Activated T-helper 1 cell treated with anti-CD3 and anti-CD28 coated beads, Interleukin-12 subunit alpha, Interleukin-12 subunit beta, Interleukin-2, Interleukin-4 antibody, amounts not matched to agents 30 ng/mL and 10 ng/mL and 1 ng/mL, durations not matched to agents 14 hours and 24 hours and 36 hours (primary cell): ENCODE measurements at regions of chr7 and their contacts with region 1.

Region 1: GRCh38 chr7:141585592-141586510 is 34.6 kb downstream of the AGK start:
- DNase-seq: no peak
- H3K4me3 Mint-ChIP-seq: peak overlapping the region; percentile 75
- H3K27ac Mint-ChIP-seq: peak overlapping the region; percentile 94
- H3K4me1 Mint-ChIP-seq: peaks cover 74% of the 10 kb centered on the region
- H3K27me3 Mint-ChIP-seq: no peaks in the 10 kb centered on the region

Region 2: GRCh38 chr7:139936760-139937310 is 1649.0 kb before region 1 on chr7:
- intact Hi-C with region 1: no loop called
- DNase-seq: no peak
- H3K4me3 Mint-ChIP-seq: no peak overlapping the region
- H3K27ac Mint-ChIP-seq: peak overlapping the region; percentile 69
- H3K4me1 Mint-ChIP-seq: peaks cover 27% of the 10 kb centered on the region
- H3K27me3 Mint-ChIP-seq: peaks cover 8% of the 10 kb centered on the region

Region 3: DNA sequence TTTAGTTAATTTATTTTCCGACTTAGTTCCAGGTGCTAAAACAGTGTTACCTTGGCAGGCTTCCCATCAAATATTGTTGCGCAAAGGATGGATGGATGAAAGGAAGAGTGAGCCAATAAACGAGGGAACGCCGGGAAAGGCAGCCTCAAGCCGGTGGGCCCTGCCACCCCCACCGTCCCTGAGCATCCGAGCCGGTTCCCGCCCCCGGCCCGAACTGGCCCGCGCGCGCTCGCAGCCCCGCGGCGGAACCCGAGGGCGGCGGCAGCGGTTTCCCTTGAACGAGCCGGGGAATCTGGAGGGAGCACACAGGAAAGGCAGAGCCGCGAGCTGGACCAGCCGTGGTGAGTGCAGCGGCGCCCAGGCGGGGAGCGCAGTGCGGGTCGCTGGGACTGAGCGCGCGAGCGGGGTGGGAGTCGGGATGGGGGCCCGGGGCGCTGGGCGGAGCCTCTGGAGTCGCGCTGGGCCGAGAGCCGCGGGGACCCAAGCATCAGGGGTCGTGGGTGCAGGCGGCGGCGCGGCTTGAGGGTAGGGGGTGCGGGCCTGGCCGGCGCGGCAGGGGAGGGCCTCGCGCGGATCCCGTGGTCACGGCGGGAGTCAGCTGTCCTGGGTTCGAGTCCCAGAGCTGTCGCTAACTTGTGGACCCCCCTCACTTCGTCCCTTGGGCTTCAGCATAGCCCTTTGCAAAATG is 34.6 kb before region 1 on chr7 and contains the start of gene AGK:
- intact Hi-C with region 1: loop called (anchors 1 kb)
- DNase-seq: peak; percentile 79
- H3K4me3 Mint-ChIP-seq: peak within 1 kb of the TSS; percentile 91
- H3K27ac Mint-ChIP-seq: peak within 1 kb of the TSS; percentile 97
- H3K4me1 Mint-ChIP-seq: peaks cover 50% of the 10 kb centered on the region
- H3K27me3 Mint-ChIP-seq: no peaks in the 10 kb centered on the region
- total RNA-seq, gene AGK: 174 and 179 TPM in 2 replicates

Region 4: DNA sequence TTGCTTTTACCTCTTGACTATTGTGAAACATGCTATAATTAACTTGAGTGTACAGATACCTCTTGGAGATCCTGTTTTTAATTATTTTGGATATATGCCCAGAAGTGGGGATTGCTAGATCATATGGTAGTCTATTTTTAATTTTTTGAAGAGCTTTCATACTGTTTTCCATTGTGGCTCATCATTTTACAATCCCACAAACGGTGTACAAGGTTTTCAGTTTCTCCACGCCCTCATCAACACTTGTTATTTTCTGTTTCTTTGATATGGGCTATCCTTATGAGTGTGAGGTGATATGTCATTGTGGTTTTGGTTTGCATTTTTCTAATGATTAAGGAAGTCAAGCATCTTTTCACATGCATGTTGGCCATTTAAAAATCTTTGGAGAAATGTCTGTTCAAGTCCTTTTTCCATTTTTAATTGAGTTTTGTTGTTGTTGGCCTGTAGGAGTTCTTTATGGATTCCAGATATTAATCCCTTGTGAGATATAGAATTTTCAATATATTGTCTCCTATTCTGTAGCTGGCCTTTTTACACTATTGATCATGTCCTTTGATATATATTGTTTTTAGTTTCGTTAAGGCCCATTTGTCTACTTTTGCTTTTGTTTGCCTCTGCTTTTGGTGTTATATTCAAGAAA is 27.2 kb before region 1 on chr7:
- intact Hi-C with region 1: loop called (anchors 1 kb)
- DNase-seq: peak; percentile 31
- H3K4me3 Mint-ChIP-seq: peak overlapping the region; percentile 60
- H3K27ac Mint-ChIP-seq: peak overlapping the region; percentile 94
- H3K4me1 Mint-ChIP-seq: peaks cover 83% of the 10 kb centered on the region
- H3K27me3 Mint-ChIP-seq: no peaks in the 10 kb centered on the region

Region 5: DNA sequence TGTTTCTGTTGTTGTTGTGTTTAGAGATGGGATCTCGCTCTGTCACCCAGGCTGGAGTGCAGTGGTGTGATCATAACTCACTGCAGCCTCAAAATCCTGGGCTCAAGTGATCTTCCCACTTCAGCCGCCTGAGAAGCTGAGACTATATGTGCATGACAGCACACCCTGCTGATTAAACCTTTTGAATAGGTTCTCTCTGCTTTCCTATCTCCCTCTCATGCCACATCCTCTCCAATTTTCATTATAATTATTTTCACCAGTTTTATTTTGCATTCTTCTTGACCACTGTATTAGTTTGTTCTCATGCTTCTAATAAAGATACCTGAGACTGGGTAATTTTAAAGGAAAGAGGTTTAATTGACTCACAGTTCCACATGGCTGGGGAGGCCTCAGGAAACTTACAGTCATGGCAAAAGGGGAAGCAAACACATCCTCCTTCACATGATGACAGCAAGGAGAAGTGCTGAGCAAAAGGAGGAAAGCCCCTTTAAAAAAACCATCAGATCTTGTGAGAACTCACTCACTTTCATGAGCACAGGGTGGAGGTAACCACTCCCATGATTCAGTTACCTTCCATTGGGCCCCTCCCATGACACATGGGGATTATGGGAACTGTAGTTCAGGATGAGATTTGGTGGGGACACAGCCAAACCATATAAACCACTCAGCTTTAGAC is 21.8 kb before region 1 on chr7:
- intact Hi-C with region 1: loop called (anchors 1 kb)
- DNase-seq: peak; percentile 23
- H3K4me3 Mint-ChIP-seq: peak overlapping the region; percentile 38
- H3K27ac Mint-ChIP-seq: peak overlapping the region; percentile 95
- H3K4me1 Mint-ChIP-seq: peaks cover 80% of the 10 kb centered on the region
- H3K27me3 Mint-ChIP-seq: no peaks in the 10 kb centered on the region

Region 6: DNA sequence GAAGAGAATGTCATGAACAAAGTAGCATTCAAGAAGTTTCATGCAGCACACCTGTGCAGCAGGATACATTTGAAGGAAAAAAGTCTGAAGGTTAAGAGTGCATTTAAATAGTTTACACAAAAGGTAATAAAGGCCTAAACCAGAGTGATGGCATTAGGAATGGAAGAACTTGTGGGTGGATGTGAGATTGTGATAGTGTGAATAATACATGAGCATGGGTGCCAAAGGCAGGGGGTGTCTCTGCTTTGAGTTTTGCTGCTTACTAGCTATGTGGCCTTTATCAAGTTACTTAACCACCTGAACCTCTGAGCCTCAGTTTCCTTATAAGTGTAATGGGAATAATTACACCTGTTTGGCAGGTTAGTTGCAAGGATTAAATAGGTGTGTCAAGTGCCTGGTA is 13.7 kb before region 1 on chr7:
- intact Hi-C with region 1: loop called (anchors 1 kb)
- DNase-seq: no peak
- H3K4me3 Mint-ChIP-seq: no peak overlapping the region
- H3K27ac Mint-ChIP-seq: peak overlapping the region; percentile 56
- H3K4me1 Mint-ChIP-seq: peaks cover 43% of the 10 kb centered on the region
- H3K27me3 Mint-ChIP-seq: no peaks in the 10 kb centered on the region